Ovary (tissue), 10 donors: ENCODE measurements at regions of chr14 and their contacts with region 1.

Region 1: GRCh38 chr14:100900837-100901390 is 2.6 kb downstream of the RTL1 start:
- DNase-seq: peak in 3 of 5 donors; percentile 52 to 74 (median 53)
- H3K4me3 ChIP-seq: no peak overlapping the region
- H3K27ac ChIP-seq: no peak overlapping the region
- H3K4me1 ChIP-seq: peaks cover 4% of the 10 kb centered on the region
- H3K27me3 ChIP-seq: no peaks in the 10 kb centered on the region
- CTCF ChIP-seq: peak in 1 of 3 donors; percentile 28
- EP300 ChIP-seq: no peak
- POLR2A ChIP-seq: no peak

Region 2: GRCh38 chr14:100967930-100968329 is 67.0 kb after region 1 on chr14:
- intact Hi-C with region 1: no loop called
- DNase-seq: no peak
- H3K4me3 ChIP-seq: no peak overlapping the region
- H3K27ac ChIP-seq: no peak overlapping the region
- H3K4me1 ChIP-seq: no peaks in the 10 kb centered on the region
- H3K27me3 ChIP-seq: no peaks in the 10 kb centered on the region
- CTCF ChIP-seq: no peak
- EP300 ChIP-seq: no peak
- POLR2A ChIP-seq: no peak

Region 3: GRCh38 chr14:100979780-100980179 is 78.9 kb after region 1 on chr14:
- intact Hi-C with region 1: no loop called
- DNase-seq: no peak
- H3K4me3 ChIP-seq: no peak overlapping the region
- H3K27ac ChIP-seq: no peak overlapping the region
- H3K4me1 ChIP-seq: no peaks in the 10 kb centered on the region
- H3K27me3 ChIP-seq: no peaks in the 10 kb centered on the region
- CTCF ChIP-seq: no peak
- EP300 ChIP-seq: no peak
- POLR2A ChIP-seq: no peak

Region 4: GRCh38 chr14:101628471-101628966 is 727.6 kb after region 1 on chr14:
- intact Hi-C with region 1: loop called in 1 of 4 experiments (anchors 5 kb)
- DNase-seq: peak; percentile 73 to 90 (median 81)
- H3K4me3 ChIP-seq: no peak overlapping the region
- H3K27ac ChIP-seq: peak overlapping the region in 1 of 2 donors; percentile 33
- H3K4me1 ChIP-seq: peaks cover 2% of the 10 kb centered on the region
- H3K27me3 ChIP-seq: no peaks in the 10 kb centered on the region
- CTCF ChIP-seq: peak; percentile 97 to 99 (median 97)
- EP300 ChIP-seq: no peak
- POLR2A ChIP-seq: peak; percentile 12